ENCODE measurements at regions of chr2 and their contacts with region 1.

Region 1: GRCh38 chr2:127701193-127701650 is at the start of gene SFT2D3:
- DNase-seq: peak in 1 of 2 donors; percentile 93
- H3K4me3 ChIP-seq: peak within 1 kb of the TSS; percentile 56 to 93
- H3K27ac ChIP-seq: peak within 1 kb of the TSS; percentile 82
- H3K4me1 ChIP-seq: peaks cover 47% of the 10 kb centered on the region
- H3K27me3 ChIP-seq: no peaks in the 10 kb centered on the region
- CTCF ChIP-seq: no peak
- POLR2A ChIP-seq: peak in 1 of 2 donors; percentile 82
- total RNA-seq, gene SFT2D3: 3.7 TPM

Region 2: GRCh38 chr2:127810619-127811396 is 109.6 kb after region 1 on chr2 and contains the start of gene WDR33:
- intact Hi-C with region 1: loop called (anchors 10 kb)
- DNase-seq: peak in 1 of 2 donors; percentile 90
- H3K4me3 ChIP-seq: peak within 1 kb of the TSS; percentile 69 to 96
- H3K27ac ChIP-seq: peak within 1 kb of the TSS; percentile 95
- H3K4me1 ChIP-seq: peaks cover 40% of the 10 kb centered on the region
- H3K27me3 ChIP-seq: no peaks in the 10 kb centered on the region
- CTCF ChIP-seq: no peak
- POLR2A ChIP-seq: peak in 1 of 2 donors; percentile 70
- total RNA-seq, gene WDR33: 37.1 TPM